AG04450 (cell line): ENCODE measurements at regions of chr9 and their contacts with region 1.

Region 1: GRCh38 chr9:6584881-6585597 is 60.5 kb downstream of the GLDC start:
- DNase-seq: no peak
- H3K4me3 ChIP-seq: no peak overlapping the region
- H3K27ac ChIP-seq: no peak overlapping the region
- H3K27me3 ChIP-seq: peaks cover 5% of the 10 kb centered on the region
- CTCF ChIP-seq: peak; percentile 46

Region 2: GRCh38 chr9:6353851-6354686 is 231.0 kb before region 1 on chr9:
- CTCF ChIA-PET with region 1: interaction called, 10 read pairs
- POLR2A ChIA-PET with region 1: no interaction called
- DNase-seq: peak; percentile 48
- H3K4me3 ChIP-seq: no peak overlapping the region
- H3K27ac ChIP-seq: no peak overlapping the region
- H3K27me3 ChIP-seq: no peaks in the 10 kb centered on the region
- CTCF ChIP-seq: peak; percentile 79

Region 3: GRCh38 chr9:6598249-6598725 is 13.2 kb after region 1 on chr9:
- CTCF ChIA-PET with region 1: interaction called, 12 read pairs
- POLR2A ChIA-PET with region 1: no interaction called
- DNase-seq: no peak
- H3K4me3 ChIP-seq: no peak overlapping the region
- H3K27ac ChIP-seq: no peak overlapping the region
- H3K27me3 ChIP-seq: peaks cover 3% of the 10 kb centered on the region
- CTCF ChIP-seq: no peak

Region 4: GRCh38 chr9:6673326-6674025 is 88.4 kb after region 1 on chr9:
- CTCF ChIA-PET with region 1: interaction called, 10 read pairs
- POLR2A ChIA-PET with region 1: no interaction called
- DNase-seq: no peak
- H3K4me3 ChIP-seq: no peak overlapping the region
- H3K27ac ChIP-seq: no peak overlapping the region
- H3K27me3 ChIP-seq: no peaks in the 10 kb centered on the region
- CTCF ChIP-seq: no peak

Region 5: GRCh38 chr9:6739218-6739617 is 154.2 kb after region 1 on chr9:
- CTCF ChIA-PET with region 1: interaction called, 11 read pairs
- POLR2A ChIA-PET with region 1: no interaction called
- DNase-seq: no peak
- H3K4me3 ChIP-seq: no peak overlapping the region
- H3K27ac ChIP-seq: no peak overlapping the region
- H3K27me3 ChIP-seq: peaks cover 2% of the 10 kb centered on the region
- CTCF ChIP-seq: peak; percentile 28